ENCODE measurements at regions of chr18 and their contacts with region 1.

Region 1: DNA sequence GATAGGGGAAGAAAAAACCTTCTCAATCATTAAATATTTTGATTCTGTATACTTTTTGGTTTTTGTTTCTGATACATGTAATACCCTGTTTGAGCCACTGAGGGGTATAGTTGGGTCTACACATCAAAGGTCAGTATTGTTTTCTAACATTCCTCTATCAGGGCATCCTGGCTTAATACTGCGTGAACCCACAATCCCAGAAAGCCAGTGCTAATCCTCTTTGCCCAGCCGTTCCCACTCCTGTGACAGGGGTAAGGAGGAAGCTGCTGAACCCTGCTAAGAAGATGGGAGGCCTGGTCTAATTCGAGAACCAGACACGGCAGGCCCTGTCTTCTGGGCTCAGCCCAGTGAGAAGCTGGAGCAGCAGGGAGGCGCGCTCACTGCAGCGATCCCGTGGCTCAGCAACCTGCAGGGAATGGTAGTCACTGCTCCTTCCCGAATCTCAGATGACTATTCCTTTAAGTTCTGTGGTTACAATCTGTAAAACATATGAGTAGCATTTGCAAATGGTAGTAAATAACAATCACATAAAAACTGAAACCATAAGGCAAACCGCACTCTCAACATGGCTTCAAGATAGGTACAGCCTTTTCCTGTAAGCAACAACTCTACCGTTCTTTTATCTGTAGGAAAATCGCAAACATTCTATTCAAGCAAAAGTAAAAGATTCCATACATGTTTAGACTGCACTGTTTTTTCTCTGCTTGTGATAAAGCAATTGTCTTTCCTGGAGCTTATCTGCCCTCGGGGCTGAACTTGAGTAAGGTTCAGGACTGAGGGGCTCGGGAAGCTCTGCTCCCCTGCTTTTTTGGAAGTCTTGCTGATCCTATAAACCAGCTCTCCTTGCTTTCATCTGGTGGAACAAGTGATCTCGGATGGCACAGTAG is 87.0 kb downstream of the EPB41L3 start:
- DNase-seq: no peak
- H3K4me3 ChIP-seq: no peak overlapping the region
- H3K27ac ChIP-seq: no peak overlapping the region
- H3K4me1 ChIP-seq: no peaks in the 10 kb centered on the region
- H3K27me3 ChIP-seq: no peaks in the 10 kb centered on the region
- CTCF ChIP-seq: peak in 3 of 4 experiments; percentile 31 to 51 (median 36)
- POLR2A ChIP-seq: no peak

Region 2: GRCh38 chr18:5393779-5394178 is 63.0 kb before region 1 on chr18:
- intact Hi-C with region 1: no loop called
- DNase-seq: no peak
- H3K4me3 ChIP-seq: no peak overlapping the region
- H3K27ac ChIP-seq: no peak overlapping the region
- H3K4me1 ChIP-seq: no peaks in the 10 kb centered on the region
- H3K27me3 ChIP-seq: no peaks in the 10 kb centered on the region
- CTCF ChIP-seq: no peak
- POLR2A ChIP-seq: no peak

Region 3: DNA sequence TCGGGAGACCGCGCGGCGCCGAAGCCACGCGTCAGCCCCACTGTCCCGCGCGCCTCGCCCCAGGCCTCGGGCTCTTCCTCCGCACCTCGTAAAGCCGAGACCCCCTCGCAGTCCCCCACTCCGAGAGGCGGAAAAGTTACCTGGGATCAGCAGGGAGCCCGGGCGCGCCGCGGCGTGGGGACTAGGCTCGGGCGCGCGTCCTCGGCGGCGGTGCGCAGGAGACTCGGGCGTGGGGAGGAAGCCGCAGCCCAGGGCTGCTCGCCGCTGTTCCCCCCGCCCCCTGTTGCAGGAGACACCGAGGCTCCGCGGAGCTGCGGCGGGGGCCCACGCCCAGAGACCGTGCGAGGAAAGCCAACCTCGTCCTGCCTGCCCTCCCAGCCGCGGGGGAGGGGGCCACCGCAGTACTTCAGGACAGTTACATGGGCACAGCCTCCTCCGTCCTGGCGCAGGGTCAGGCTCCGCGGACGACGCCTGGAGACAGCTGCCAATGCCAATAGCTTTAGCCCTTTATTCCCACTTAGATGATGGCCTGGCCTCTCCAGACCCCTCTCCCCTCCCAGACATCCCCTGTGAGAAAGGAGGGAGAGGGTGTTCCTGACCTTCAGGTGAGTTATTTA is 87.1 kb after region 1 on chr18 and contains the start of gene EPB41L3:
- intact Hi-C with region 1: loop called (anchors 5 kb)
- DNase-seq: no peak
- H3K4me3 ChIP-seq: peak within 1 kb of the TSS; percentile 54
- H3K27ac ChIP-seq: peak within 1 kb of the TSS; percentile 53 to 60
- H3K4me1 ChIP-seq: no peaks in the 10 kb centered on the region
- H3K27me3 ChIP-seq: no peaks in the 10 kb centered on the region
- CTCF ChIP-seq: no peak
- POLR2A ChIP-seq: peak; percentile 22
- total RNA-seq, gene EPB41L3: 25.0 to 182 TPM

Region 4: GRCh38 chr18:5746844-5747243 is 290.0 kb after region 1 on chr18:
- intact Hi-C with region 1: no loop called
- DNase-seq: no peak
- H3K4me3 ChIP-seq: no peak overlapping the region
- H3K27ac ChIP-seq: no peak overlapping the region
- H3K4me1 ChIP-seq: no peaks in the 10 kb centered on the region
- H3K27me3 ChIP-seq: no peaks in the 10 kb centered on the region
- CTCF ChIP-seq: no peak
- POLR2A ChIP-seq: no peak

Measured in prostate gland (tissue), 2 donors.